Activated CD8-positive, alpha-beta T cell treated with anti-CD3 and anti-CD28 coated beads for 36 hours (primary cell): ENCODE measurements at regions of chr18 and their contacts with region 1.

Region 1: DNA sequence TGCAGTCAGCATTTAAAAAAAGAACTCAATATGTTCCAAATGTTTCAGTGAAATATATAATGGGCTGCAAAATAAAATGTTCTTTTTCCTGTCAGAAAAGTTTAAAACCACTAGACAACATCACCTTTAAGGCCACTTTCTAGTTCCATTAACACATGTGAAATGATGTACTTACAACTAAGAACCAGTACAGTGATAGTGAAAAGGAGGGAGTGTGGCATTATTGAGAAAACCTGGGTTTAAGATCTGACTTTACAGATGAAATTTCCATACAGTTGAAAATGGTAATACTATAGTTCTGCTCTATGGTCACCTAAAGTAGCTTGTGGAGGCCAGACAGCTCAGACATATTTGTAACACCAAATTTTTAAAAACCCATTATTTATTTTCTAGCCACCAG is 14.7 kb downstream of the MEX3C start:
- DNase-seq: no peak
- ATAC-seq: peak; percentile 42
- H3K4me3 Mint-ChIP-seq: no peak overlapping the region
- H3K27ac Mint-ChIP-seq: peak overlapping the region; percentile 63
- H3K4me1 Mint-ChIP-seq: peaks cover 68% of the 10 kb centered on the region
- H3K27me3 Mint-ChIP-seq: no peaks in the 10 kb centered on the region
- CTCF ChIP-seq: no peak

Region 2: DNA sequence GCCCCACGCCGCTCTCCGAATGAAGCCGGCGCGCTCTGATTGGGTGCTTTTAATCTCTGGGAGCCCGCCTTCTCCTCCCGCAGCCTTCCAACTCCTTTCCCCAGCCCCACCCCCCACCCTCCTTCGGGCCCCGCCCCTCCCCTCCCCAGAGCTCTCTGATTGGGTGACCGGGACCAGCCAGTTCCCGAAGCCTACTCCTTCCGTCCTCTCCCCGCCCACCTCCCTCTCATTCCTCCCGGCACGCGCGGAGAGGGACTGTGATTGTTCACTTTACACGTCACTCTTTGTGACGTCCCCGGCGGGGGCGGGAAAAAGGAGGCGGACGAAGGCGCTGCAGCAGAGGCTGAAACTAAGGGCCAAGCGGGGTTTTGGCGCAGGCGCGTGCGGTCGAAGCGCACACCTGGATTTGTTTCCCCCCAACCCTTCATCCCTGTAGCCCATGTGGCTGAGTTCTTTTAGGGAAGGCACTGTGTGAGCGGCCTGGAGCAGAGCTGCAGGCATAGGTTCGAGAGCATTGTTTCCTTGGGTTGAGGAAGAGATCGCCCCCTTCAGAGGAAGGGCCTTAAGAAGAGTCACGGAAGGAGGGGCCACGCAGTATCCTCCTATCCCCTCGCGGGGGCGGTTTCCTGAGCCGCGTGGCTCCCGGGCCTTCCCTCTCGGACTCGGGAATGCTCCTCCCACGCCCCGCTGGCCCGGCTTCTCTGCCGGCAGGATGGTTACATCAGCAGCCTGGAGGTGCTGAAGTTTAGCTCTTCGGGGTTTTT is 15.0 kb after region 1 on chr18 and contains the start of gene MEX3C:
- CTCF ChIA-PET with region 1: interaction called, 5 read pairs
- POLR2A ChIA-PET with region 1: interaction called, 19 read pairs
- intact Hi-C with region 1: no loop called
- DNase-seq: peak; percentile 100
- ATAC-seq: peak; percentile 85
- H3K4me3 Mint-ChIP-seq: peak within 1 kb of the TSS; percentile 85
- H3K27ac Mint-ChIP-seq: peak within 1 kb of the TSS; percentile 97
- H3K4me1 Mint-ChIP-seq: peaks cover 18% of the 10 kb centered on the region
- H3K27me3 Mint-ChIP-seq: no peaks in the 10 kb centered on the region
- CTCF ChIP-seq: no peak
- total RNA-seq, gene MEX3C: 51.5 to 52.6 TPM

Region 3: DNA sequence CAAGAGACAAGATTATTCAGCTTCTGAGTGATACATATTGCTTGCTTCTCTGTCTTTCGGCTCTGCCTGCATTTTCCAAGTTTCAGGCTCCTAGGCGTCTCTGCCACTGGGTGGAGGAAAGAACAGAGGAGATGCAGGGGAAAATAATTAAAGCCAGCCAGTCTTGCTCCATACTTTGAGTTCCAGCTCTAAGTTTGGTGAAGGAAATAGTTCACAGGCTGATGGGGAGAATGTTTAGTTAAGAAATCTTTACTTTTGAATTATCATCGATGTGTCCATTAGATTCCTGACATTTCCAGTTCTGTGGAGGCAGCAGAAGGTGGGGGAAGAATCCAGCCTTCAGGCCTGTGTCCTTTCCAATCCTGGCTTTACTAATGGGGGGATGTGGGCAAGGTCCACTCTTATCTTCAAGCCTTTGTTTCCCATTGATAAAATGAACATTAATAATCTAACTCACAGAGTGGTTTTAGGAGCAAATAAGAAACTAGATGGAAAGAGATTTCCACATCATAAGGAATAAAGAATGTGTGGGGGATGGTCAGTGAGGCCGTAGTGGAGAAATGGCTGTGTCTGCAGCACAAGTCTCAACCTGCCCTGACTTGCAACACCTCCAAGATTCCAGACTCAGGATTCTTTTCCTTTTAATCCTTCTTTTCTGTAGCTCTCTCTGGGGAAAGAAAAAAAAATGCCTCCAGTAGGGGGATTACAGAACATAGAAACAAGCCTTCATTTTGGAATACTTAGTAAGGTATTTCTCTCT is 138.7 kb after region 1 on chr18:
- CTCF ChIA-PET with region 1: no interaction called
- POLR2A ChIA-PET with region 1: no interaction called
- intact Hi-C with region 1: no loop called
- DNase-seq: no peak
- ATAC-seq: no peak
- H3K4me3 Mint-ChIP-seq: no peak overlapping the region
- H3K27ac Mint-ChIP-seq: no peak overlapping the region
- H3K4me1 Mint-ChIP-seq: no peaks in the 10 kb centered on the region
- H3K27me3 Mint-ChIP-seq: peaks cover 4% of the 10 kb centered on the region
- CTCF ChIP-seq: no peak